Adrenal gland (tissue), 19 donors: ENCODE measurements at regions of chr6 and their contacts with region 1.

Region 1: DNA sequence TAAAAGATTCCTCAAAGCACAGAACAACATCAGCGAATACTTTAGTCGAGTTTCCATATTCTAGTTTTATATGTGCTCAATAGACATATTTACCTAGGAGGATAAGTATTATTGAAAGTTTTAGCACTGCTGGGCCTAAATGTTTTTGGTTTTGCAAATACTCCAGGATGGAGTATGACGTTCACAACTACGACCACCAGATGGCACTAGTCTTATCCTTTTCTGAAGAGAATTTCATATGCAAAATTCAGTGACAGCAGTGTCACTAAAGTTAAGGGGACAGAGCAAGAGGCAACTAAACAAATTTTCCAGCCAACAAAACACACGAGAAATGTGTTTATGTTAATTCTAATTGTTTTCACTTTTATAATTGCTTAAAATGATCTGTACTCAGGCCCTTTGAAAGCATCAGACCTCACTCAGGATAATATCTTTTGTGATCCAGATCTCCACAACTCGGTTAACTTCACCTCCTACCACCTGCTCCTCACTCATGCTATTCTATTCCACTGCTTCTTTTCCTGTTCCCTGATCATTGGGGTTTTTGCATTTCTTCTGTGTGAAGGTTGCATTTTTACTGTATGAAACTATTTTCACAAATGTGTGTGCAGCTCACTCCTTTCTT is 220.8 kb downstream of the TRDN start:
- DNase-seq: peak; percentile 60 to 91 (median 82)
- H3K4me3 ChIP-seq: no peak overlapping the region
- H3K27ac ChIP-seq: no peak overlapping the region
- H3K4me1 ChIP-seq: peaks cover 3 to 13% of the 10 kb centered on the region in 2 donors
- H3K27me3 ChIP-seq: no peaks in the 10 kb centered on the region
- CTCF ChIP-seq: peak; percentile 76 to 85 (median 80)
- POLR2A ChIP-seq: no peak

Region 2: DNA sequence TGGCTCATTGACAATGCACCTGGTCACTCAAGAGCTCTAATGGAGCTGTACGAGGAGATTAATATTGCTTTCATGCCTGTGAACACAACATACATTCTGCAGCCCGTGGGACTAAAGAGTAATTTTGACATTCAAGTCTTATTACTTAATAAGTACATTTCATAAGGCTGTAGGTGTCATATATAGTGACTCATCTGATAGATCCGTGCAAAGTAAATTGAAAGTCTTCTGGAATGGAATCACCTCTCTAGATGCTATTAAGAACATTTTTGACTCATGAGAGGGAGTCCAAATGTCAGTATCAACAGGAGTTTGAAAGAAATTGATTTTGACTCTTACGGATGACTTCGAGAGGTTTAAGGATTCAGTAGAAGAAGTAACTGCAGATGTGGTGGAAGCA is 152.0 kb before region 1 on chr6:
- intact Hi-C with region 1: no loop called
- DNase-seq: no peak
- H3K4me3 ChIP-seq: no peak overlapping the region
- H3K27ac ChIP-seq: no peak overlapping the region
- H3K4me1 ChIP-seq: no peaks in the 10 kb centered on the region
- H3K27me3 ChIP-seq: no peaks in the 10 kb centered on the region
- CTCF ChIP-seq: no peak
- POLR2A ChIP-seq: no peak

Region 3: GRCh38 chr6:123338394-123338793 is 77.6 kb before region 1 on chr6:
- intact Hi-C with region 1: no loop called
- DNase-seq: no peak
- H3K4me3 ChIP-seq: no peak overlapping the region
- H3K27ac ChIP-seq: no peak overlapping the region
- H3K4me1 ChIP-seq: no peaks in the 10 kb centered on the region
- H3K27me3 ChIP-seq: no peaks in the 10 kb centered on the region
- CTCF ChIP-seq: no peak
- POLR2A ChIP-seq: no peak

Region 4: DNA sequence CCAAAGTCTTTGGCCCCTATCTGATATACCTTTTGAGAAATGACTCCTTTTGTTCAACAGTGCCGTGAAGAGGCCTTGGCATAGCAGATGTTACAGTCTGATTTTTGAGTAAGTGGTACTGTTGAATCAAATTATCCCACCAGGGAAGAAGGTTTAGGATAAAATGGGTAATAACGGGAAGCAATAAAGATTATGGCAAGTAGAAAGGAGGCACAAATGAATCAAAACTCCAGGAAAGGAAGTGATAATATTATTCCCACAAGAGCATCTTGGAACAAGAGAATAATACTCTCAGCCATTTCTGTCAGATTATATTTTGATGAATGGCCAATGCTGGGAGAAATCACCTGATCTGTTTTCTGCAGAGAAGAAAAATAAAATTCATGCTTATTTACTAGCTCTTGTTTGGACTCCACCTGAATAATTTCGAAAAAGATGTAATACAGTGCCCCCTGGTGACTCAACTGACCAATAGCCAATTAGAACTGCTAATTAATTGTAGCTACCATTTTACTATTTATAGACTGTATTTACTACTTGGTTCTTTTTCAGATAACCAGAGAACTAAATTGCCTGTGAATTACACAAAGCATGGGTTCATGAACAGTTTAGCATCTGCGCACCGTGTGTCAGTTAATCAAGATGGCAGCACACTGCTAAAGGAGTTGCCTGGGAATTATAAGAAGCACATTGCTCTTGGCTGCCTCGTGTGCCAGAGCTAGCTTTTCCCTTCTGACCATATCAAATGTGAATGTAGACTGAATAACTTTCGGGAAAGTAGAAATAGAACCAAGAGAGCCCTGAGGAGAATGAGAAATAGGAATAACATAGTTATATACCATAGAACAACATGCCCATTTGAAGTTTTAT is 299.3 kb after region 1 on chr6:
- intact Hi-C with region 1: loop called (anchors 2 to 5 kb)
- DNase-seq: peak; percentile 20 to 54 (median 39)
- H3K4me3 ChIP-seq: no peak overlapping the region
- H3K27ac ChIP-seq: no peak overlapping the region
- H3K4me1 ChIP-seq: peaks cover 0 to 6% of the 10 kb centered on the region in 2 donors
- H3K27me3 ChIP-seq: no peaks in the 10 kb centered on the region
- CTCF ChIP-seq: peak; percentile 50 to 83 (median 70)
- POLR2A ChIP-seq: no peak